AG04449 (cell line): ENCODE measurements at regions of chr1 and their contacts with region 1.

Region 1: GRCh38 chr1:26787706-26788514 is at the start of gene PIGV:
- DNase-seq: no peak
- H3K4me3 ChIP-seq: peak within 1 kb of the TSS; percentile 73
- CTCF ChIP-seq: no peak

Region 2: GRCh38 chr1:26618561-26618960 is 169.3 kb before region 1 on chr1:
- CTCF ChIA-PET with region 1: interaction called, 24 read pairs
- POLR2A ChIA-PET with region 1: no interaction called
- DNase-seq: no peak
- H3K4me3 ChIP-seq: no peak overlapping the region
- CTCF ChIP-seq: no peak

Region 3: DNA sequence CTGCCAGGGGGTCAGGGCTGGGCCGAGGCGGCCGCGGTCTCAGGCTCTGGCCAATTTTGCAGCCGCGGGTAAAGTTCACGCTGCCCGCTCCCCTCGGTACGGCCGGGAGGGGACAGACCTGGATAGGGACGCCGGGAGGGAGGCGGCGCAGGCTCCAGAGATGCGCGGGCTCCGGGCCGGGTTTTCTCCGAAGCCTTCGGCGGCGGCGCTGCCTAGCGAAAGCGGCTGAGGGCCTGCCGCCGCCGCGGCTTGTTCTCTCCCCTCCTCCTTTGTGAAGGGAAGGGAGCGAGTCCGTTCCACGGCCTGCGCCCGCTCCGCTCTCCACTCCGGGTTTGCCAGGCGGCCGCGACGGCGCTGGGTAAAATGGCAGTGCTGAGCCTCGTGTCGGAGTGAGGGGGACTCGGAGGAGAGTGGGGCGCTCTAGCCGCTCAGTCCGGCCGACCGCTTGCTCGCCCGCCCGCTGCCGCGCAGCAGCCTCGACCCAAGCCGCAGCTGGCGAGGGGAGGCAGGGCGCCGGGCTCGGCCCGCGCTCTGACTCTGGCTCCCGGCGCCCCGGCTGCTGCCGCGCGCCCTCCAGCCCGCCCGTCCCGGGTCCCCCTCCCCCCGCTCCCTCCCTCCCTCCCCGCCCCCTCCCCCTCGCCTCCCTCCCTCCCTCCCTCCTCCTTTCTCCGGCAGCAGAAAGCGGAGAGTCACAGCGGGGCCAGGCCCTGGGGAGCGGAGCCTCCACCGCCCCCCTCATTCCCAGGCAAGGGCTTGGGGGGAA is 92.4 kb before region 1 on chr1 and contains the start of gene ARID1A:
- CTCF ChIA-PET with region 1: interaction called, 62 read pairs
- POLR2A ChIA-PET with region 1: interaction called, 34 read pairs
- DNase-seq: peak; percentile 85
- H3K4me3 ChIP-seq: peak within 1 kb of the TSS; percentile 69
- CTCF ChIP-seq: no peak

Region 4: GRCh38 chr1:26723013-26723991 is 64.6 kb before region 1 on chr1:
- CTCF ChIA-PET with region 1: interaction called, 17 read pairs
- POLR2A ChIA-PET with region 1: no interaction called
- DNase-seq: peak; percentile 96
- H3K4me3 ChIP-seq: no peak overlapping the region; the same call in 1 of the 2 replicates
- CTCF ChIP-seq: no peak

Region 5: DNA sequence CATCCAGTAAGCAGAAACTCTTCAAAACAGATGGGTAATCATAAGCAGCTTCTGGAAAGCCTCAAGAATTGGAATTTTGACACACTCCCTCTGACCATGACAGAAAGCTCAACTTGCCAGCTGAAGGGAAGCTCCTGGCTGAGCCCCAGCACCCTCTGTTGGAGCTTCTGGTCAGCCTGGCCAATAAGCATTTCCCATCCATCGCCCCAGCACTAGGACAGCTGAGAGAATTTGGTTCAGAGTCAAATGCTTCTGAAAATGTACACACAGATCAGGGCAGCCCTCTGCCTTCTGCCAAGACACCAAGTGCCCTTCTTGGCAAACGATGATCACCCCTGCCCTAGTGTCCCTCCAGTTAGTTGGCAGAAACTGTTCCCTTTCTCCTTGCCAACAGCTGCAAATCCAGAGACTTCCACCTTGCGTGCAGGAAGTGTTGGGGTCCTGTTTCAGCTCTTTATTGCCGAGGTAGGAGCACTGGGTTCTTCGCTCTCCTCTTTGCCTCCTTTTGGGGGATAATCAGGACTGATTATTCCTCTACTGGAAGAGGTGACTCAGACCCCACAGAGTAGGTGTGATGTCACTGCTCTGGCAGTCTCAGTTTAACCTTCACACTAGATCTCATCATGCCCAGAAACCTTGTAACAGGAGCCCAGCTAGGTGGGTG is 11.7 kb after region 1 on chr1:
- CTCF ChIA-PET with region 1: interaction called, 57 read pairs
- POLR2A ChIA-PET with region 1: interaction called, 6 read pairs
- DNase-seq: no peak
- H3K4me3 ChIP-seq: peak overlapping the region; percentile 24; the same call in 1 of the 2 replicates
- CTCF ChIP-seq: peak; percentile 9

Region 6: DNA sequence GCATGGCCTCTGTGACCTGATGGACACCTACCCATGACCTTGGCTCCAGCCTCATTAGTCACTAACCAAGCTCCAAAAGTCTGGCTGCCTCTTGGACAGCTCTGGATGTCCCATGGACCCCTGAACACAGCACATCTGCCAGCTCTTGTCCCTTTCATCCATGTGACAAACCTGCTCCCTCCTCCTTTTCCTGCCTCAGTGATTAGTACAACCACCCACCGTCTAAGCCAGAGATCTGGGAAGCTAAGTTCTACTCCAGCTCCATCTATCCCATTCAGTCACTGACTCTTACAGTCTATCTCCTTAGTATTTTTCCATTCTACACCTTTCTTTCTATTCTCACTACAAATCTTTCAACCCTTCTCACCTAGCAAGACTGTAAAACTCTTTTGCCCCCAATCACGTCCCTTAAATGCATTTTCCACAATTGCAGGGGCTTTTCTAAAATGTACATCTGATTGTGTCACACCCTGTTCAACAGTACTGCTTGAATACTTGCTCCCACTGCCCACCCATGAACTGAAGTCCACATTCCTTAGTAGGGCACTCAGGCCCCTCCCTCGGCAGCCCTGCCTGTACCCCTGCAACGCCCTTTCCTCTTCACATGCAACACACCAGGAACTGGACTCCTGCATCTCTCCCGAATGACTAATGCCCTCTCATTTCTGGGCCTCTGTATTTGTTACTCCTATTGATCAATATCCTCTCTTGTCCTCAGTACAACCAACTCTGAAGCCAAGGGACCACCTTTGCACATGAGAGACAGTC is 95.0 kb after region 1 on chr1:
- CTCF ChIA-PET with region 1: interaction called, 13 read pairs
- POLR2A ChIA-PET with region 1: no interaction called
- DNase-seq: no peak
- H3K4me3 ChIP-seq: no peak overlapping the region
- CTCF ChIP-seq: no peak